Thyroid gland (tissue), 4 donors: ENCODE measurements at regions of chr11 and their contacts with region 1.

Region 1: DNA sequence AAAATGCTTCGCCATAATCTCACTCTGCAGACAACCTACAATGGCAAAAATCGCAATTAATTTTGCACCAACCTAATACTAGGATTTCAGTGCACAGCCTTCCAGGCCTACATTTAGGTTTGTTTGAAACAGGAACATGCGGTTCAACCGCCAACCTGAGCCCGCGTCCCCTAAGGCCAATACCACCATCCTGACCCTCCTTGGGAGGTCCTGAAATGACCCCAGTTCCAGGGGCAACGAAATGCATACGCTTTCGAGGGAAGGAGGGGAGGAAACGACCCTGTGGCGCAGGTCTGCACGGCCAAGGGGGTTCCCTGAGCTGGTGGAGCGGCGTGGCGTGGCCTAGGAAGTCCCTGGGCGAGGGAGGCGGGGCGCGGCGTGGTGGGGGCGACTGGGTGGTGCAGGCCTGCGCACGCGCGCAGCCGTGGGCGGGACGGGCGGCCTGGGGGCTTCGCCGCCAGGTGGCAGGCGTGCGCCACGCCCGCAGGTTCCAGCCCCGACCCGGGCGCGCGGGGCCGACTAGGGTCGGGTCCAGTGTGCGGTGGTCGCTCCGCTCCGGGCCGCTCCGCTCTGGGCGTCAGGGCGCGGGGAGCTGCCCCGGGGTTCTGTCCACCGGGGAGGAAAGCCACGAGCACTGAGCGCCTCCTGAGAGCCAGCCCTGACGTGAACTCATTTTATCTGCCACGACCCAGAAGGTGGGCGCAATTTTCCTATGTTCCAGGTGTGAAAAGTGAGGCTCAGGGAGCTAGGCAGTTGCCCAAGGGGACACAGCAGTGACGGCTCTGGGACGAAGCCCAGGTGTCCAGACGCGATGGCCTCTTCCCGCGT is 94.1 kb downstream of the SWAP70 start:
- DNase-seq: peak; percentile 88 to 91
- H3K4me3 ChIP-seq: peak overlapping the region; percentile 25 to 85 (median 54)
- H3K27ac ChIP-seq: peak overlapping the region; percentile 66 to 83 (median 81)
- H3K4me1 ChIP-seq: peaks cover 20 to 67% of the 10 kb centered on the region in 2 donors
- H3K27me3 ChIP-seq: no peaks in the 10 kb centered on the region
- CTCF ChIP-seq: peak in 5 of 6 experiments; percentile 35 to 98 (median 95)
- POLR2A ChIP-seq: peak in 1 of 2 donors; percentile 53

Region 2: GRCh38 chr11:9380773-9381172 is 377.2 kb before region 1 on chr11:
- intact Hi-C with region 1: no loop called
- DNase-seq: no peak
- H3K4me3 ChIP-seq: no peak overlapping the region
- H3K27ac ChIP-seq: no peak overlapping the region
- H3K4me1 ChIP-seq: peaks cover 5 to 6% of the 10 kb centered on the region in 2 donors
- H3K27me3 ChIP-seq: no peaks in the 10 kb centered on the region
- CTCF ChIP-seq: no peak
- POLR2A ChIP-seq: no peak

Region 3: GRCh38 chr11:9527481-9528140 is 230.4 kb before region 1 on chr11:
- intact Hi-C with region 1: loop called (anchors 10 kb)
- DNase-seq: no peak
- H3K4me3 ChIP-seq: no peak overlapping the region
- H3K27ac ChIP-seq: peak overlapping the region; percentile 0 to 95 (median 55)
- H3K4me1 ChIP-seq: peaks cover 41 to 43% of the 10 kb centered on the region in 2 donors
- H3K27me3 ChIP-seq: no peaks in the 10 kb centered on the region
- CTCF ChIP-seq: no peak
- POLR2A ChIP-seq: no peak

Region 4: GRCh38 chr11:9577556-9577955 is 180.5 kb before region 1 on chr11:
- intact Hi-C with region 1: no loop called
- DNase-seq: no peak
- H3K4me3 ChIP-seq: no peak overlapping the region
- H3K27ac ChIP-seq: peak overlapping the region in 2 of 3 donors; percentile 41 to 50
- H3K4me1 ChIP-seq: peaks cover 6 to 20% of the 10 kb centered on the region in 2 donors
- H3K27me3 ChIP-seq: no peaks in the 10 kb centered on the region
- CTCF ChIP-seq: no peak
- POLR2A ChIP-seq: no peak

Region 5: DNA sequence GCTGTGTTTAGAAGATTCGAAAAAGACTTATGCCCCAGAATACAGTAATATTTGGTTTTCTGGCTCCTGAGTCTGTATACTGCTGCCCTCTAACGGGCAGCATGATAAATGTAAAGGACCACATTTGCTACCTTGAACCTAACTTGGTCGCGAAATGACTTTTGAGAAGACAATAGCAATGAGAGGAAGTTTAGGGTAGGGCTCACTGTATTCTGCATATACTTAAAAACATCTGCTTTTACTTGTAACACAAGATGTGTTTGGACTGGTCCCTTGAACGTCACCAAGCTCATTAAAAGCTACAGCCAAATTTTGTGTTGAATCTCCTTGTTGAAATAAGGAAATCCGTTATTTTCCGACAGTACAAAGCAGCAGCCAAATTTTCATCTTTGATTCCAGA is 215.0 kb after region 1 on chr11:
- intact Hi-C with region 1: loop called (anchors 5 kb)
- DNase-seq: peak; percentile 11 to 17
- H3K4me3 ChIP-seq: no peak overlapping the region
- H3K27ac ChIP-seq: no peak overlapping the region
- H3K4me1 ChIP-seq: peaks cover 5 to 8% of the 10 kb centered on the region in 2 donors
- H3K27me3 ChIP-seq: no peaks in the 10 kb centered on the region
- CTCF ChIP-seq: peak; percentile 36 to 74 (median 68)
- POLR2A ChIP-seq: no peak

Region 6: DNA sequence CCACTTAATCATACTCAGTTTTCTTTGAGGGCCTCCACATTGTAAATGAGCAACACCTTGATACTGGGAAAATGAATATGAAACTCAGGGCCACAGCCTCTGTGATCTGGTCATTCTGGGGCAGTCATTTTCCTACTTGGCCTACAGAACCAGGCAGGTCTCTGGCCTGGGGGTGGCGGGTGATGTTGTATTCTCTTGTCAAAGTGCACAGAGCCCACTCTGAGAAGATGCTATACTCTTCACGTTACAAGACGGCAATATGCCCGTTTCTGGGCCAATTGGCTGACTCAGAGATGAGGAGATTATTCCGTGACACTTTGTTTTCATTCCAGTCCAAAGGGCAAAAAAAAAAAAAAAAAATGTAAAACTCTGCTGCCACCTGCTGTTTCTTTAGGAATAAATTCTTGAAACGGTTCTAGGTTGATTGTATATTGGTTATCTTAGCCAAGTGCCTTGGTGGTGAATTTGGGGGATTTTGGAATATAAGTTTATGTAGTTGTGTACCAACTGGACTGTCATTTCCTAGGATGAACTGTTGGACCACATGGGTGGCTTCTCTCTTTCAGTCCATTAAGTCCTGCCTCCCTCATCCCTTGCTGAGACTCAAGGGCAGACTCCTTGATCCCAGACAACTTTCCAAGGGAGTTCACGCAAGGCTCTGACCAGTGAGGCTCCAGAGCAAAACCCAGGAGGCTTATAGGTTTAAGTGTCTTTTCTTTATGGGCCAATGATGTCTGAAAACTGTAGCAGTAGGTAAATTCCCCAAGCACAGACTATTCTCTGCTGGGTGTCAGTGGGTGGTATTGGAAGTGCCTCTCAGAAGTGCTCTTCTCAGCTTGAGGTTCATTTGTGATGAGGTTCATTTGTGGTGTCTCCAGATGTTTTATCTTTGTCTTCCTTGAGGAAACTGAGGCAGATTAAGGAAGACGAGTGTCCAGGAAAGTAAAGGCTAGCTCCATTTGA is 565.1 kb after region 1 on chr11:
- intact Hi-C with region 1: loop called (anchors 5 kb)
- DNase-seq: peak; percentile 41 to 46
- H3K4me3 ChIP-seq: no peak overlapping the region
- H3K27ac ChIP-seq: peak overlapping the region in 2 of 3 donors; percentile 44 to 50
- H3K4me1 ChIP-seq: peaks cover 10 to 34% of the 10 kb centered on the region in 2 donors
- H3K27me3 ChIP-seq: no peaks in the 10 kb centered on the region
- CTCF ChIP-seq: peak in 5 of 6 experiments; percentile 19 to 81 (median 54)
- POLR2A ChIP-seq: no peak